ENCODE measurements at regions of chr17 and their contacts with region 1.

Region 1: DNA sequence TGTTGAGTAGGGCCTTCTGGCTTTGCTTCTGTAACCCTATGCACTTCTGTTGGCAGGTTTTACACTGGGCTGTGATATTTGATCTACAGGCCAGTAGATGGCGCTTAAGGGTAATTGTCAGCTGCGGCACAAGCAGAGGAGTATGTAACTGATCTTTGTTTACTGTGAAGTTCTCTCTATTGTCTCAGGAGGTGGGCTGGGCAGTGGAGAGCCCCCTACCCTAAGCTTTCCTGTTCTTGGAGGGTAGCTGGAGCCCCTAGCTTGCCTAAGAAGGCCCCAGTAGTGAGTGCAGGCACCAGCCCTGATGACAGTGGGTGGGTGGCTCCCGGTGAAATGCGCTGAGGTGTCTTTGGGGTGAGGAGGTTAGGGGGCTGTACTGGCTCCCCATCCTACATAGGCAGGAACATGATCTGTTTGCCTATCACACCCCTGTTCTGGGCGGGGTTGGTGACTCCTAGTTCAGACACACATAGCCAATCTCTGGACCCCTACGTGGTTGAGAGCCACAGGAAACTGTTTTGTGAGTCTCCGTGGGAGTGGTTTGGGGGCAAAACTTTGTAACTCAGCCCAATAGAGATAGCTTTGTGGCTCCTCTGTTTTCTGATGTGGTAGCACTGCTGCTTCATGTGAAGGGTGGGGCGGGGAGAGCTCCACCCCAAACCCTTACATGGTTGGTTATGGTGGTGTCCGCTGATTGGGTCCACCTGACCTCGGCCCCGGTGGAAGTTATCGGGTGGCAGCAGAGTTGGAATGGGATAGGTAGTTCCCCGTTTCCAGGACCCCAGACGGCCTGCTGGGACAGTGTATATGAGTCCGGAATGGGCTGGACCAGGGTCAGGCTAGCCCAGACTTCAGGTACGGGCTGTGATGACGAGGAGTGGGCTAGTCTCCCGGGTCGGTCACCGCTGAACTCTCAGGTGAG is 60.4 kb downstream of the SLFN11 start:
- DNase-seq: peak; percentile 43
- ATAC-seq: peak; percentile 90
- H3K4me3 Mint-ChIP-seq: peak overlapping the region; percentile 80
- H3K27ac Mint-ChIP-seq: no peak overlapping the region; the same call in 1 of the 2 replicates
- H3K4me1 Mint-ChIP-seq: peaks cover 34% of the 10 kb centered on the region
- H3K27me3 Mint-ChIP-seq: peaks cover 49% of the 10 kb centered on the region
- CTCF ChIP-seq: peak; percentile 69; the same call in 1 of the 2 replicates

Region 2: GRCh38 chr17:35273684-35274083 is 39.4 kb before region 1 on chr17:
- CTCF ChIA-PET with region 1: no interaction called
- POLR2A ChIA-PET with region 1: no interaction called
- DNase-seq: no peak
- ATAC-seq: no peak
- H3K4me3 Mint-ChIP-seq: no peak overlapping the region
- H3K27ac Mint-ChIP-seq: no peak overlapping the region
- H3K4me1 Mint-ChIP-seq: 0 out of 2 replicates have a peak, but pooled peaks cover 4% of the 10 kb centered on the region
- H3K27me3 Mint-ChIP-seq: peaks cover 17% of the 10 kb centered on the region
- CTCF ChIP-seq: no peak

Region 3: DNA sequence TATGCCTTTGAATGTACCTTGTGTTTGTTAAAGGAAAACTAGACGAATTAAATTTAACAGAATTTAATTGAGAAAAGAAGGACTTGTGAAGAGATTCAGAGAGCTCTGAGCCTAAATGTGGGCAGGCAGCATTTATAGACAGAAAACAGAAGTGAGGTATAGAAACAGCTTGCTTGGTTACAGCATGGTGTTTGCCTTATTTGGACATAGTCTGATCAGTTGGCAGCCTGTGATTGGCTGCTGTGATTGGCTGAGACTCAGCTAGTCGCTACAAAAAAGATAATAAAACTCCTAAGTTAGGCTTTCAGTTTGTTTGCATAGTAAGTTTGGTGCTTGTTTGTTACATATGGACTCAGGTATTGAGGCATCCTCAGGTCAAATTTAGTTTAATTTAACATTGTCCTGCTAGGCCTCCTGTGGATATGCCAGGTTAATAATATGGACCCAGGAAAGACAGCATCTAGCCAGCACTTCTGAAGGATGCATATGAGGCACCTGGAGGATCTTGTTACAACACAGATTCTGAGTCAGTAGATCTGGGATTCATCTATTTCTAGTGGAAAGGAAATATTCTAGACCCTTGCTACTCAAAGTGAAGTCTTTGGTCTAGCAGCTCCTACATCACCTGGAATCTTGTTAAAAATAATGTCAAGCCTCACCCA is 26.8 kb before region 1 on chr17:
- CTCF ChIA-PET with region 1: interaction called, 10 read pairs
- POLR2A ChIA-PET with region 1: no interaction called
- DNase-seq: no peak
- ATAC-seq: peak; percentile 77
- H3K4me3 Mint-ChIP-seq: no peak overlapping the region
- H3K27ac Mint-ChIP-seq: no peak overlapping the region
- H3K4me1 Mint-ChIP-seq: peaks cover 6% of the 10 kb centered on the region; the same call in 1 of the 2 replicates
- H3K27me3 Mint-ChIP-seq: peaks cover 33% of the 10 kb centered on the region
- CTCF ChIP-seq: no peak

Region 4: DNA sequence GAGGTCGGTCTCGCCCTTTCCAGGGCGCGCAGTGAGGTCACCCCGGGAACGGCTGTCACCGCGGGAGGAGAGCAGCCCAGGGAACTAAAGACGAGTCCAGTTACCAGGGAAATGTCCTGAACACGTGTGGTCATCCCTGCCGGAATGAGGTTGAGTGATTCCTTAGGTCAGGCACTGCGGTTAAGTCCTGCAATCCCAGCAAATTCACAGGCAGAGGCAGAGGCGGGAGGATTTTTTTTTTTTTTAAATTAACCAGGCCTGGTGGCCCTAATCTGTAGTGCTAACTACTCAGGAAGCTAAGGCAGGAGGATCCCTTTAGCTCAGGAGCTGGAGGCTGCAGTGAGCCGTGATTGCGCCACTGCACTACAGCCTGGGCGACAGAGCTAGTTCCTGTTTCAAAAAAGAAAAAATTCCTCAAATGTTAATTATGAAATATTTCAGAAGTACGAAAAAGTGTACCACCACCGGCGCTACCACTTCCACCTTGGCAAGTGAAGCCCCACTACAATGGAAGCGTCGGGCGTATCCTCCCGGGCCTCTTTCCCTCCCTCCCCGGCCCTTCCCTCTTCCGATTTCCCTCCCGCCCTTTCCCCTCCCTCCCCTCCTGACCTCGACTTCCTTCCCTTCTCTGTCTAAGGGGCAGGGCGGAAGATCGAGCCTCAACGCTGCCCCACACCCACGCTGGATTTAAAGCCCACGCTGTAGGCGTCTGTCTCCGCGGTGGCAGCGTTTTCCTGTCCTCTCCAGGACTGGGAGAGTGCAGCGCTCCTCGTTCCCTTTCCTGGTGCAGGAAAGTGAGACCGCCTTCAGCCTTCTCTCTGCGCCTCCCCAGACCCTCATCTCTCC is 33.1 kb after region 1 on chr17:
- CTCF ChIA-PET with region 1: interaction called, 15 read pairs
- POLR2A ChIA-PET with region 1: no interaction called
- DNase-seq: peak; percentile 24
- ATAC-seq: peak; percentile 80
- H3K4me3 Mint-ChIP-seq: peak overlapping the region; percentile 82
- H3K27ac Mint-ChIP-seq: no peak overlapping the region
- H3K4me1 Mint-ChIP-seq: peaks cover 17% of the 10 kb centered on the region
- H3K27me3 Mint-ChIP-seq: peaks cover 85% of the 10 kb centered on the region
- CTCF ChIP-seq: no peak

Region 5: GRCh38 chr17:35352284-35352683 is 39.2 kb after region 1 on chr17:
- CTCF ChIA-PET with region 1: interaction called, 10 read pairs
- POLR2A ChIA-PET with region 1: no interaction called
- DNase-seq: no peak
- ATAC-seq: no peak
- H3K4me3 Mint-ChIP-seq: no peak overlapping the region
- H3K27ac Mint-ChIP-seq: no peak overlapping the region
- H3K4me1 Mint-ChIP-seq: peaks cover 31% of the 10 kb centered on the region
- H3K27me3 Mint-ChIP-seq: peaks cover 49% of the 10 kb centered on the region
- CTCF ChIP-seq: no peak

Region 6: DNA sequence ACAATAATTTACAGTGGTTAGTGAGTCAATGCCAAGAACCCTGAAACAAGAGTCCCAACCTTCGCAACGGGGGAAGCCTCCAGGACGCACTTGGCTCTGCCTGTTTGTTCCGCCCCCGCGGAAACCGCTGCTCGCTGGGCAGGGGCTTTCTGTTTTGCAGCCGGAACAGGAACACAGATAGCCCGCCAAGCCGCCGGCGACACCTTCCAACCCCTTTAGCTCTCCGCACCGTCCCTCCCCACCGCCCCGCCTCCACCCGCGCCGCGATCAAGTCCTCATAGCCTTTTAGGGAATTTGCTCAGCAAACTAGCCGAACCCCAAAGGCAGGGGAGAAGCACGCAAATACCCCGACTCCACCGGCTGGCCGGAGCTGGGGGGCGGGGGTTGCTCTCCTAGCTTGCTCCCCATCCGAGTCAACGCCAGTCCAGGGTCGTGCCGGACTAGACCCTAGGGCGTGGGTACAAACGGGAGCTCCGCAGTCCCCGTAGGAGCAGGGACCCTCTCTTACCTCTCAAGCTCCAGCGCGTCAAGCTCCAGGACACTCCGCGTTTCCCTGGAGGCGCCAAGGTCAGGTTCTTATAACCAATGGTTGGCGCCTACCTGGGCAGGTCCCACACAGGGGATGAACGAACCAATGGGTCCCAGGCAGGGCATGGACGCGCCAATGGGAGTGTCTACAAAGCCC is 135.3 kb after region 1 on chr17 and contains the start of gene SLFN13:
- CTCF ChIA-PET with region 1: interaction called, 13 read pairs
- POLR2A ChIA-PET with region 1: interaction called, 9 read pairs
- DNase-seq: peak; percentile 85
- ATAC-seq: peak; percentile 94
- H3K4me3 Mint-ChIP-seq: peak within 1 kb of the TSS; percentile 79
- H3K27ac Mint-ChIP-seq: peak within 1 kb of the TSS; percentile 52; the same call in 1 of the 2 replicates
- H3K4me1 Mint-ChIP-seq: peaks cover 26% of the 10 kb centered on the region
- H3K27me3 Mint-ChIP-seq: peaks cover 99% of the 10 kb centered on the region
- CTCF ChIP-seq: no peak
- total RNA-seq, gene SLFN13: 19.7 to 22.1 TPM (median 20.8 TPM) in 3 replicates

Region 7: DNA sequence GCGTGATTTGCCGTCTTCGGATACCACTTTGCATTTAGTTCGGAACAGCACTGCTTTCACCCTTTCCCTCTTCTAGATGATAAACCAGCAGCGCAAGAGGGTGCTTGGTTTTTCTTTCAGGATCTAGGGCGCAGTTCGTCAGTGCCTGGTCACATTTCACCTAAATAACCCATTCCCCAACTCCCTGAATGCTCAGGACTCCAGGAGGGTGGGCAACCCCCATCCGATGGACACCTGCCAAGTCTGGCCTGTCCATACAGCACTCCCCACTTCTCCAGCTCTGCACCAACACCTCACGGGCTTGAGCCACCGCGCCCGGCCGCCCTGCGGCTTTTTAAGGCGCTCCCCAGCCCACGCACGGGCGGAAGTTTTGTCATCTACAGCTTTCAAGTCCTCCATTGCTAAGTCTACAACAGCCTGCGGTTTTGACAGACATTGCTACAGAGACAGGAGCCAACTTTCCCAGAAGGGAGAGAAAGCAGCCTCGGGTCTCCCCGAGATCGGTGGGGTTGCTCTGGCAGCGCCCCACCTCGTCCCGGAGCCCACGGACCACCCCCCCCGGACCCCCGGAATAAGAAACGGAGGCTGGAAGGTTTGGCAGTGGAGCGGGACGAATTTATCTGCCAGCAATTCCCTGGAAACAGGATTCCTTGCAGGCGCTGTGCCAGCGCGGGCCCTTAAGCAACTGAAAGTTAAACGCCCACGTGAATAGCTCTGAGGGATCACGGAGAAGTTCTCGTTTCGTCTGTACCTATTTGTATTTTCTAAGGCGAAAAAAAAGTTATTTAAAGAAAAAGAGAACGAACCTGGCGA is 174.1 kb after region 1 on chr17:
- CTCF ChIA-PET with region 1: interaction called, 51 read pairs
- POLR2A ChIA-PET with region 1: interaction called, 4 read pairs
- DNase-seq: no peak
- ATAC-seq: no peak
- H3K4me3 Mint-ChIP-seq: peak overlapping the region; percentile 64
- H3K27ac Mint-ChIP-seq: no peak overlapping the region
- H3K4me1 Mint-ChIP-seq: peaks cover 39% of the 10 kb centered on the region
- H3K27me3 Mint-ChIP-seq: peaks cover 100% of the 10 kb centered on the region
- CTCF ChIP-seq: no peak

Region 8: GRCh38 chr17:35537601-35538141 is 224.6 kb after region 1 on chr17 and contains the start of gene SLFN12L:
- CTCF ChIA-PET with region 1: interaction called, 71 read pairs
- POLR2A ChIA-PET with region 1: no interaction called
- DNase-seq: no peak
- ATAC-seq: no peak
- H3K4me3 Mint-ChIP-seq: no peak within 1 kb of the TSS
- H3K27ac Mint-ChIP-seq: no peak within 1 kb of the TSS
- H3K4me1 Mint-ChIP-seq: no peaks in the 10 kb centered on the region
- H3K27me3 Mint-ChIP-seq: peaks cover 6% of the 10 kb centered on the region; the same call in 1 of the 2 replicates
- CTCF ChIP-seq: no peak
- total RNA-seq, gene SLFN12L: 0.07 to 0.16 TPM (median 0.13 TPM) in 3 replicates

Measured in WTC11 (cell line).